Body of pancreas (tissue), 4 donors: ENCODE measurements at regions of chr2 and their contacts with region 1.

Region 1: GRCh38 chr2:100242891-100243619 is 79.2 kb downstream of the LONRF2 start:
- DNase-seq: peak; percentile 70 to 79 (median 74)
- ATAC-seq: peak; percentile 85
- H3K4me3 ChIP-seq: no peak overlapping the region
- H3K27ac ChIP-seq: no peak overlapping the region
- H3K4me1 ChIP-seq: no peaks in the 10 kb centered on the region
- H3K27me3 ChIP-seq: no peaks in the 10 kb centered on the region
- CTCF ChIP-seq: peak; percentile 41 to 88 (median 77)
- POLR2A ChIP-seq: no peak

Region 2: DNA sequence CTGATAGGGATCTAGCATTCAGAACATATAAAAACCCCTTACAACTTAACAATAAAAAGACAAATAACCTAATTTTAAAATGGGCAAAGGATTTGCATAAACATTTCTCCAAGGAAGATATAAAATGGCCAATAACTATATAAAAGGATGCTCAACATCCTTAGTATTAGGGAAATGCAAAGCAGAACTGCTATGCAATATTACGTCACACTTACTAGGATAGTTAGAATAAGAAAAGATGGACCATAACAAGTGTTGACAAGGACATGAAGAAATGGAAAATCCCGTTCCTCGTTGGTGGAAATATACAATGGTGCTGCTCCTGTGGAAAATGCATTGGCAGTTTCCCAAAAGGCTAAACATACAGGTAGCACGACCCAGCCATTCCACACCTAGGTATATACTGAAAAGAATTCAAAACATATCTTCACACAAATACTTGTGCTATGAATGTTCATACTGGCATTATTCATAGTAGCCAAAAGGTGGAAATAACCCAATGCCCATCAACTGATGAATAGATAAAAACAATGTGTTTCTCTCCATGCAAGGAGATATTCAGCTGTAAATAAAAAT is 705.1 kb before region 1 on chr2:
- intact Hi-C with region 1: no loop called
- DNase-seq: no peak
- ATAC-seq: no peak
- H3K4me3 ChIP-seq: no peak overlapping the region
- H3K27ac ChIP-seq: no peak overlapping the region
- H3K4me1 ChIP-seq: no peaks in the 10 kb centered on the region
- H3K27me3 ChIP-seq: no peaks in the 10 kb centered on the region
- CTCF ChIP-seq: no peak
- POLR2A ChIP-seq: no peak

Region 3: DNA sequence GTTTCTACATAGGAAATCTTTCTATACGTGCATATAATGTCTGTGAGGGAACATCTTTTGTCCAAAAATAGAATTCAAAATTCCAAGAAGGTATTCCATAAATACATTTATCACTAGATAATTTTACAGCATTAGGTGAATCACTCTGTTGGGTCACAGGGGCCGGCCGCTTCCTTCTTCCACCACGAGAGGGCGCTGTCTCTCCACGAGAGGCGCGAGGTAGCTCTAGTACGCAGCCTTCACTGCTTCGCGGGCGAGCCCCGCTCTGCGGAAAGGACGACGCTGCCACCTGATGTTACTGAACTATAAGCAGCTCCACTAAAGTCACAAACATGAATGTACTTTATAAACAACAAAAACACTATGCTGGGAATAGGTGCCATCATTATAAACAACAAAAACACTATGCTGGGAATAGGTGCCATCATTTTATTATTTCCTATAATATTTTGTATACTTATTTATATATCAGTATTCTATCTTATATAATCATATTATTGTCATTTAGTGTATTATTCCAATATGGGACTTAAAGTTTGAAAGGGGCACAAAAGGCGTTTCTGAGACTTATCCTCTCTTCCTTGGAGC is 683.9 kb before region 1 on chr2:
- intact Hi-C with region 1: loop called (anchors 5 kb)
- DNase-seq: peak; percentile 83 to 88 (median 85)
- ATAC-seq: peak; percentile 81
- H3K4me3 ChIP-seq: no peak overlapping the region
- H3K27ac ChIP-seq: no peak overlapping the region
- H3K4me1 ChIP-seq: no peaks in the 10 kb centered on the region
- H3K27me3 ChIP-seq: no peaks in the 10 kb centered on the region
- CTCF ChIP-seq: peak; percentile 82 to 100 (median 96)
- POLR2A ChIP-seq: no peak

Region 4: DNA sequence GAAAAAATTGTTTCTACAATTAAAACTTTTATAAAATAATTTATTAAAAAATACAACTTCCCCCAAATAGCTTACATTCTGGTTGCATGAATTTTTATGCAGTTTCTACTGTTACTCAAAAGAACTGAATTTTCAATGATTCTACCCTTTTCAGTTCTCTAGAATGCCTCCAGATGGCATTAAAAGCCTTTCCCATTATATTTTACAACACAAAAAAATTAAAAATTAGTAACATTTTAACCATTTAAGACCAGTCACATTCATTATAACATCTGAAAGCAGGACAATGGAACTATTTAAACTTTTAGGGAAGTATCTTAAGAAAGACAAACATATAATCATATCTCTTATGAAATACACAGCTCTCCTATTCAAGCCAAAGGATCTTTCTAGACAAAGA is 517.2 kb before region 1 on chr2:
- intact Hi-C with region 1: loop called (anchors 10 kb)
- DNase-seq: no peak
- ATAC-seq: no peak
- H3K4me3 ChIP-seq: no peak overlapping the region
- H3K27ac ChIP-seq: no peak overlapping the region
- H3K4me1 ChIP-seq: no peaks in the 10 kb centered on the region
- H3K27me3 ChIP-seq: no peaks in the 10 kb centered on the region
- CTCF ChIP-seq: peak in 5 of 7 experiments; percentile 15 to 39 (median 23)
- POLR2A ChIP-seq: no peak

Region 5: GRCh38 chr2:99818842-99819241 is 424.2 kb before region 1 on chr2:
- intact Hi-C with region 1: loop called (anchors 10 kb)
- DNase-seq: no peak
- ATAC-seq: no peak
- H3K4me3 ChIP-seq: no peak overlapping the region
- H3K27ac ChIP-seq: no peak overlapping the region
- H3K4me1 ChIP-seq: no peaks in the 10 kb centered on the region
- H3K27me3 ChIP-seq: no peaks in the 10 kb centered on the region
- CTCF ChIP-seq: peak in 6 of 7 experiments; percentile 13 to 51 (median 40)
- POLR2A ChIP-seq: no peak